Colonic mucosa (tissue), 4 donors: ENCODE measurements at regions of chr19 and their contacts with region 1.

Region 1: GRCh38 chr19:44903602-44904425 is 1.8 kb upstream of the APOE start:
- DNase-seq: peak; percentile 79
- H3K4me3 ChIP-seq: no peak overlapping the region
- H3K27ac ChIP-seq: no peak overlapping the region
- H3K4me1 ChIP-seq: no peaks in the 10 kb centered on the region
- H3K27me3 ChIP-seq: peaks cover 8% of the 10 kb centered on the region
- CTCF ChIP-seq: peak; percentile 97

Region 2: GRCh38 chr19:44951179-44952159 is 47.7 kb after region 1 on chr19:
- intact Hi-C with region 1: loop called (anchors 2 kb)
- DNase-seq: peak; percentile 72
- H3K4me3 ChIP-seq: no peak overlapping the region
- H3K27ac ChIP-seq: no peak overlapping the region
- H3K4me1 ChIP-seq: peaks cover 11% of the 10 kb centered on the region
- H3K27me3 ChIP-seq: no peaks in the 10 kb centered on the region
- CTCF ChIP-seq: peak; percentile 70